Left colon (tissue), 2 donors: ENCODE measurements at regions of chr1 and their contacts with region 1.

Region 1: GRCh38 chr1:179888071-179888470 is 6.0 kb downstream of the TOR1AIP1 start:
- DNase-seq: no peak
- ATAC-seq: no peak

Region 2: DNA sequence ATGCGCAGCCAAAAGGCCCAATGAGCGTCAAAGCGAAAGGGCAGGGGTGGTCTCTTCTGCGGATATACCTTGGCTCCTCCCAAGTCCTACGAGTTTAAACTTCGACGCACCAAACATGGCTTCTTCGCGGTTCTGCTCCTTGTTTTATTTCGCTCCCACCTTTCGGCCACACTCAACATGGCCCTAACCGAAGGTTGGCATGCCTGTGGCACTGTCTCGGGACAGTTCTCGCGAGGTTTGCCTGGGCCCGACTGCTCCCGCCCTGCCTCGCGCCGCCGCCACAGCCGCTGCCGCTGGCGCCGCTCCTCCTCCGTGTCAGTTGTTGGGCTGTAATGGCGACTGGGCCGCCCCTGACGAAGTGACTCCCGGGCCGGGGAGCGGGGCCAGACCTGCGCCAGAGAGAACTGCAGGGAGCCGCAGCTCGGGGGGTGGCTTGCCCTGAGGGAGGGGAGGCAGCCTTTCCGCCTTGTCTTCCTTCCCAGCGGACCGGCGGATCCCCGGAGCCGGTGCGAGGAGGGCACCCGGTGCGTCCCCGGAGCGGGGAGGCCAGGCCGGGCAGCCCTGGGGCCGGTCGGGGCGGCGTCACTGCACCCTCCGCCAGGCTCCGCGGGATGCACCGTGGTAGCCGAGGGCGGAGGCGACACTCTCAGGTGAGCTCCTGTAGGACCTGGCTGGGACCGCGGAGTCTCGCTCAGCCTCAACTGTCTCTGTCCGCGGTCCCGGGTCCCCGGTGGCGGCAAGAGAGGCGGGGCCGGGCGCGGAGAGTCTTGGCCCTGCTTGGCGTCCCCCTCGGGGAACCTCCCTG is 66.6 kb after region 1 on chr1 and contains the start of gene CEP350:
- intact Hi-C with region 1: loop called in 1 of 2 experiments (anchors 5 kb)
- DNase-seq: peak; percentile 99
- ATAC-seq: peak; percentile 95
- total RNA-seq, gene CEP350: 47.7 to 49.7 TPM

Region 3: GRCh38 chr1:180040034-180040433 is 152.0 kb after region 1 on chr1:
- intact Hi-C with region 1: loop called in 1 of 2 experiments (anchors 10 kb)
- DNase-seq: no peak
- ATAC-seq: no peak